Cardiac septum (tissue), 1 donor: ENCODE measurements at regions of chr5 and their contacts with region 1.

Region 1: DNA sequence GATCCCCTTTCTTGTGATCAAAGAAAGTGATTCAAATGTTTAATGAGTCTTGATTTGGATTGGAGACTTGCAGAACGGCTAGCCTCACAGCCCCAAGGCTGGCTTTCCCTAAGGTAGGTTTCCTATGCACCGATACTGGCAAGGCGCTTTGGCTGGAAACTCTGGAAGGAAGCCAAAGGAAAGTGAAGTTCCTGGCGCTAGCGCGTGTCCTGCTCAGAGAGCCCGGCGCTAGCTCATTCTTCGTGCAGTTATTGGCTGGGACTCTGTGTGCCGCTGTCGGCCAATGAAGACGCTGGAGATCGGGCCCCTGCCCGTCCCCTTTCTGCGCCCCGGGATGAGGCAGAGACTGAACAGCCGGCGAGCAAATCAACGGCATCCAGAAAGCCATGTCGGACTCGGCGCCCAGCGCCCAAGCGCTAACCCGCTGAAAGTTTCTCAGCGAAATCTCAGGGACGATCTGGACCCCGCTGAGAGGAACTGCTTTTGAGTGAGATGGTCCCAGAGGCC is at the start of gene PCDHGC3:
- DNase-seq: peak; percentile 94
- total RNA-seq, gene PCDHGC3: 16.9 TPM

Region 2: GRCh38 chr5:141439411-141440141 is 36.1 kb before region 1 on chr5:
- intact Hi-C with region 1: loop called (anchors 5 kb)
- DNase-seq: no peak

Region 3: DNA sequence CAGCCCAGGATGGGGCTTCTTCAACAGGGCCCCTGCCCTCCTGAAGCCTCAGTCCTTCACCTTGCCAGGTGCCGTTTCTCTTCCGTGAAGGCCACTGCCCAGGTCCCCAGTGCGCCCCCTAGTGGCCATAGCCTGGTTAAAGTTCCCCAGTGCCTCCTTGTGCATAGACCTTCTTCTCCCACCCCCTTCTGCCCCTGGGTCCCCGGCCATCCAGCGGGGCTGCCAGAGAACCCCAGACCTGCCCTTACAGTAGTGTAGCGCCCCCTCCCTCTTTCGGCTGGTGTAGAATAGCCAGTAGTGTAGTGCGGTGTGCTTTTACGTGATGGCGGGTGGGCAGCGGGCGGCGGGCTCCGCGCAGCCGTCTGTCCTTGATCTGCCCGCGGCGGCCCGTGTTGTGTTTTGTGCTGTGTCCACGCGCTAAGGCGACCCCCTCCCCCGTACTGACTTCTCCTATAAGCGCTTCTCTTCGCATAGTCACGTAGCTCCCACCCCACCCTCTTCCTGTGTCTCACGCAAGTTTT is 36.8 kb after region 1 on chr5:
- intact Hi-C with region 1: loop called (anchors 2 kb)
- DNase-seq: peak; percentile 93

Region 4: GRCh38 chr5:141543053-141543452 is 67.4 kb after region 1 on chr5:
- intact Hi-C with region 1: no loop called
- DNase-seq: no peak